CD8-positive, alpha-beta T cell (primary cell): ENCODE measurements at regions of chr16 and their contacts with region 1.

Region 1: GRCh38 chr16:47037746-47038458 is 64.4 kb upstream of the DNAJA2 start:
- DNase-seq: peak; percentile 80 to 95 (median 88)
- ATAC-seq: peak; percentile 98
- H3K4me3 ChIP-seq: peak overlapping the region; percentile 65 to 72
- H3K4me3 Mint-ChIP-seq: peak overlapping the region; percentile 79
- H3K27ac ChIP-seq: no peak overlapping the region
- H3K27ac Mint-ChIP-seq: no peak overlapping the region
- H3K4me1 ChIP-seq: peaks cover 7% of the 10 kb centered on the region
- H3K4me1 Mint-ChIP-seq: peaks cover 5% of the 10 kb centered on the region
- H3K27me3 ChIP-seq: peaks cover 0 to 12% of the 10 kb centered on the region in 2 experiments
- H3K27me3 Mint-ChIP-seq: peaks cover 3% of the 10 kb centered on the region
- CTCF ChIP-seq: peak; percentile 88

Region 2: DNA sequence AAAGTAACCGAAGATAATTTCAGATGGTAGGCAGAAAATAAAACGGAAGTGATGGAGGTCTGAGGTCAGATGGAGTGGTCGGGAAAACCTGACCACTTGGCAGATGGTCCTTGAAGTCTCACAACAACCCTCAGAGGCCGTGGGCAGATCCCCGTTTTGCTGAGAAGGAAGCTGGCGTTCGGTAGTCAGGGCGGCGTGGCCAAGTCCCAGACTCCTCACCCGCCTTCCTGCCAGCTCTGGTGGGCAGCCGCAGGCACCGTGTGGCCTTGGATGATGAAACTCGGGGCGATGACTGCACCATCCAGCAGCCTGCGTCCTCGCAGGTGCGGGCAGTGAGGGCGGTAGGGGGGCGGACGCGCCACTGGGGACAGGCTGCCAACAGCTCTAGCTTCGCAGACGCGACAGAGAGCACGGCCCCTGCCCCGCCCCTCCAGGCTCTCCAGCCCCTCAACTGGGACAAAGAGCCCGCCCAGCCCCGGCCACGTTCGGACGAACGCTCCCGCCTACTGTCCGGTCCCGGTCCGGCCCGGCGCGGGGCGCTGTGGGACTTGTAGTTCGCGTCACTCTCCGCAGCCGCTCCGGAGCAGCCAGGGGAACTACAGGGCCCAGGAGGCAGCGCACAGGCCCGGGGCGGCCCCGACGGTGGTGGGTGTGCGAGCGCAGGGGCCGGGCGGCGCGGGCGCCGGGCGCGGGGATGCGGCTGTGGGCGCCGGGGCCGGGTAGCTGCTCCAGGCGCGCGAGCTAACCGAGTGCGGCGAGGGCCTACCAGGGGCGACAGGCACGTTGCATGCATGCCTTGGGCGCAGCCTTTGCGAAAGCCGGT is 154.0 kb before region 1 on chr16 and contains the start of gene GPT2:
- CTCF ChIA-PET with region 1: no interaction called
- POLR2A ChIA-PET with region 1: no interaction called
- intact Hi-C with region 1: no loop called
- DNase-seq: peak; percentile 27 to 77 (median 59)
- ATAC-seq: peak; percentile 91
- H3K4me3 ChIP-seq: peak within 1 kb of the TSS; percentile 59 to 70
- H3K4me3 Mint-ChIP-seq: peak within 1 kb of the TSS; percentile 92
- H3K27ac ChIP-seq: no peak within 1 kb of the TSS
- H3K27ac Mint-ChIP-seq: no peak within 1 kb of the TSS
- H3K4me1 ChIP-seq: no peaks in the 10 kb centered on the region
- H3K4me1 Mint-ChIP-seq: peaks cover 10% of the 10 kb centered on the region
- H3K27me3 ChIP-seq: no peaks in the 10 kb centered on the region
- H3K27me3 Mint-ChIP-seq: peaks cover 29% of the 10 kb centered on the region
- CTCF ChIP-seq: no peak
- total RNA-seq, gene GPT2: 0.08 TPM in 1 of 2 experiments, not detected in the other

Region 3: GRCh38 chr16:47141773-47142485 is 104.0 kb after region 1 on chr16:
- CTCF ChIA-PET with region 1: interaction called, 8 read pairs
- POLR2A ChIA-PET with region 1: no interaction called
- intact Hi-C with region 1: loop called (anchors 2 to 5 kb)
- DNase-seq: peak; percentile 63 to 87 (median 80)
- ATAC-seq: peak; percentile 77
- H3K4me3 ChIP-seq: peak overlapping the region; percentile 3 to 28
- H3K4me3 Mint-ChIP-seq: peak overlapping the region; percentile 76
- H3K27ac ChIP-seq: no peak overlapping the region
- H3K27ac Mint-ChIP-seq: no peak overlapping the region
- H3K4me1 ChIP-seq: peaks cover 12% of the 10 kb centered on the region
- H3K4me1 Mint-ChIP-seq: peaks cover 21% of the 10 kb centered on the region
- H3K27me3 ChIP-seq: peaks cover 3 to 5% of the 10 kb centered on the region in 2 experiments
- H3K27me3 Mint-ChIP-seq: peaks cover 22% of the 10 kb centered on the region
- CTCF ChIP-seq: peak; percentile 85